CD4-positive, alpha-beta memory T cell (primary cell): ENCODE measurements at regions of chr10 and their contacts with region 1.

Region 1: DNA sequence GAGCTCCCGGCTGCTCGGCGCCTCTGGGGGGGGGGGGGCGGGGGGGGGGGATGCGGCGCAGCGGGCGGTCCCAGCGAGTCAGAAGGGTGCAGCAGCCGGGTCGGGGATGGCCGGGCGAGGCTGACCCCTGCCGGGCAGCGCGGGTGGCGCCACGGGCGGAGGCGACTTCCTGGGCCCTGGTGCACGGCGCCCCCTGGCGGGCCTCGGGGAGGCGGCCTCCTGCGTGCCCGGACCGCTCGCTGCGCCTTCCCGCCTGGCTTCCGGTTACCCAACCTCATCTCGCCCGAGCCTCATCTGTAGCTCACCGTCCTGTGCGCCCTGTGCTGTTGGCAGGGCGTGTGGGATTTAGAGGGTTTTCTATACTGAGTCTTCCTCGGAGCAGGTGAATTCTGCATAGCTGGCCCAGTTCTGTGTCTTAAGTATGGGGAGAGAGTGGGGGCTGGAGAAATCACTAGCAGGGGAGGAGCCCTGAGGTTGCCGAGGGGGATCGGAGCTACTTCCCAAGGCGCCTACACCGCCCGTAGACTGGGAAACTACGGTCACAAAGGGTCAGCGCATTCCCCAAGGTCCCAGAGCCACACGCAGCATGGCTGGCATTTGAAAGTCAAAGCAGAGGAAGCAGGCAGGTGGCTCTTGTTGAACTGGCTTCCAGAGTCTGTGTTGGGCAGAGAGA is 28.3 kb upstream of the WDFY4 start:
- DNase-seq: peak; percentile 74 to 81 (median 78)
- H3K4me3 ChIP-seq: peak overlapping the region in 1 of 2 donors; percentile 12
- H3K4me3 Mint-ChIP-seq: peak overlapping the region; percentile 77 to 89 (median 85)
- H3K27ac ChIP-seq: no peak overlapping the region
- H3K27ac Mint-ChIP-seq: no peak overlapping the region
- H3K4me1 ChIP-seq: peaks cover 12% of the 10 kb centered on the region
- H3K4me1 Mint-ChIP-seq: peaks cover 3 to 13% (median 6%) of the 10 kb centered on the region in 4 donors
- H3K27me3 ChIP-seq: no peaks in the 10 kb centered on the region
- H3K27me3 Mint-ChIP-seq: peaks cover 7 to 9% of the 10 kb centered on the region in 2 donors

Region 2: GRCh38 chr10:48363617-48364355 is 292.6 kb before region 1 on chr10:
- CTCF ChIA-PET with region 1: interaction called, 31 read pairs
- POLR2A ChIA-PET with region 1: no interaction called
- intact Hi-C with region 1: loop called (anchors 1 kb)
- DNase-seq: peak in 4 of 5 donors; percentile 20 to 34 (median 25)
- H3K4me3 ChIP-seq: no peak overlapping the region
- H3K4me3 Mint-ChIP-seq: no peak overlapping the region
- H3K27ac ChIP-seq: no peak overlapping the region
- H3K27ac Mint-ChIP-seq: no peak overlapping the region
- H3K4me1 ChIP-seq: peaks cover 5% of the 10 kb centered on the region
- H3K4me1 Mint-ChIP-seq: peaks cover 14 to 26% (median 20%) of the 10 kb centered on the region in 4 donors
- H3K27me3 ChIP-seq: no peaks in the 10 kb centered on the region
- H3K27me3 Mint-ChIP-seq: no peaks in the 10 kb centered on the region

Region 3: DNA sequence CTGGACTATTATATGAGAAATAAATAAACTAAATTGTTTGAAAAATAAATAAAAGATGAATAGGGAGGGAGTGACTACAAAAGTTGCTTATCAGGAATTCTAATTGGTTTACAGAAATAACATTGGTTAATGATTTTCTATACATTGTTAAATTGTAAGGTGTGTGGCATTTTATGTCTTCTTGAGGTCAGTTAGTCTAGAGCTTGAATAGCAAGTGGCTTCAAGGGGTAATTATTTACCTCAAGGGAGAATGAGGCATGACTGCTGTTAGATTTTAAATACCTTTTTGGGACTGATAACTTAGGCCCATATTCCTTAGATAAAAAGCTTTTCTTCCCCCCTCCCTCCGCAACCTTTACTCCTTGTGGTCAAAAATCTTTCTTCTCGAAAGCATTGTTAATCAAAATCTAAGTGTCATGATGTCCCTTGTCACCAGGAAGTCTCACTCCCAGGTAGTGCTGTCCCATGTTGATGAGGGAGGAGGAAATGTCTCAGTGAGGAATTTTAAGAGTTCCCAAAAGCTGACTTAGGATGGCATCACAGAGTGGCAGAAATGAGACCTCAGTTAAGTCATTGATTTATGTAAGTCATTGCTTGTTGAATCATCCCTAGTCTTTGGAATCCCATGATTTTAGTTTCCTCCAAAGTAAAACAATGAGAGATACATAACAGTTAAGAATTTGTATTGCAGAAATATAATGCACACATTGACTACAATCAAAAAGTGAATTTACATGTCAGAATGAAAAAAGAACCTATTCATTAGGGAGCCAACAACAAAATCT is 278.4 kb before region 1 on chr10:
- CTCF ChIA-PET with region 1: no interaction called
- POLR2A ChIA-PET with region 1: no interaction called
- intact Hi-C with region 1: no loop called
- DNase-seq: no peak
- H3K4me3 ChIP-seq: no peak overlapping the region
- H3K4me3 Mint-ChIP-seq: no peak overlapping the region
- H3K27ac ChIP-seq: no peak overlapping the region
- H3K27ac Mint-ChIP-seq: no peak overlapping the region
- H3K4me1 ChIP-seq: no peaks in the 10 kb centered on the region
- H3K4me1 Mint-ChIP-seq: peaks cover 0 to 6% (median 3%) of the 10 kb centered on the region in 4 donors
- H3K27me3 ChIP-seq: no peaks in the 10 kb centered on the region
- H3K27me3 Mint-ChIP-seq: no peaks in the 10 kb centered on the region

Region 4: GRCh38 chr10:48506147-48506917 is 150.0 kb before region 1 on chr10:
- CTCF ChIA-PET with region 1: no interaction called
- POLR2A ChIA-PET with region 1: no interaction called
- intact Hi-C with region 1: no loop called
- DNase-seq: no peak
- H3K4me3 ChIP-seq: no peak overlapping the region
- H3K4me3 Mint-ChIP-seq: no peak overlapping the region
- H3K27ac ChIP-seq: no peak overlapping the region
- H3K27ac Mint-ChIP-seq: no peak overlapping the region
- H3K4me1 ChIP-seq: no peaks in the 10 kb centered on the region
- H3K4me1 Mint-ChIP-seq: no peaks in the 10 kb centered on the region
- H3K27me3 ChIP-seq: no peaks in the 10 kb centered on the region
- H3K27me3 Mint-ChIP-seq: peaks cover 0 to 6% of the 10 kb centered on the region in 2 donors

Region 5: GRCh38 chr10:48608279-48608681 is 48.1 kb before region 1 on chr10:
- CTCF ChIA-PET with region 1: interaction called, 37 read pairs
- POLR2A ChIA-PET with region 1: no interaction called
- intact Hi-C with region 1: loop called (anchors 1 kb)
- DNase-seq: peak in 3 of 5 donors; percentile 9 to 11 (median 10)
- H3K4me3 ChIP-seq: no peak overlapping the region
- H3K4me3 Mint-ChIP-seq: no peak overlapping the region
- H3K27ac ChIP-seq: no peak overlapping the region
- H3K27ac Mint-ChIP-seq: no peak overlapping the region
- H3K4me1 ChIP-seq: no peaks in the 10 kb centered on the region
- H3K4me1 Mint-ChIP-seq: peaks cover 0 to 6% (median 3%) of the 10 kb centered on the region in 4 donors
- H3K27me3 ChIP-seq: no peaks in the 10 kb centered on the region
- H3K27me3 Mint-ChIP-seq: peaks cover 25 to 32% of the 10 kb centered on the region in 2 donors

Region 6: DNA sequence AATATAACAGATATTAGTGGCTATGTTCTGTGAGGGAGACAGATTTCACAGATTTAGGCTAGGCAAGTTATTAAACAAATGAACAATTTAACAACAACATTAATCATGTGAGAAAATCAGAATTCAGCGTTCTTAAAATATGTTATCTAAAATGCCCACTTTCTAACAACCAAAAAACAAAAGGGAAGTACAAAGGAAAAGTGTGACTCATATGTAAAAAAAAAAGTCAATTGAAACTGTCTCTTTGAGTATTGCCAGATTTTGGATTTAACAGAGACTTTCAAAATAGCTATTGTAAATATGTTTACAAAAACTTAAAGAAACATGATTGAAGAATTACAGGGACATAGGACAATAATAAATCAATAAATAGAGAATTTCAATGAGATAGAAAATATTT is 16.7 kb before region 1 on chr10:
- CTCF ChIA-PET with region 1: interaction called, 12 read pairs
- POLR2A ChIA-PET with region 1: interaction called, 9 read pairs
- intact Hi-C with region 1: no loop called
- DNase-seq: no peak
- H3K4me3 ChIP-seq: no peak overlapping the region
- H3K4me3 Mint-ChIP-seq: no peak overlapping the region
- H3K27ac ChIP-seq: no peak overlapping the region
- H3K27ac Mint-ChIP-seq: no peak overlapping the region
- H3K4me1 ChIP-seq: peaks cover 3% of the 10 kb centered on the region
- H3K4me1 Mint-ChIP-seq: peaks cover 1 to 5% (median 2%) of the 10 kb centered on the region in 4 donors
- H3K27me3 ChIP-seq: no peaks in the 10 kb centered on the region
- H3K27me3 Mint-ChIP-seq: peaks cover 12 to 13% of the 10 kb centered on the region in 2 donors

Region 7: GRCh38 chr10:49512121-49512809 is 855.9 kb after region 1 on chr10:
- CTCF ChIA-PET with region 1: interaction called, 23 read pairs
- POLR2A ChIA-PET with region 1: no interaction called
- intact Hi-C with region 1: no loop called
- DNase-seq: peak in 4 of 5 donors; percentile 35 to 46 (median 38)
- H3K4me3 ChIP-seq: no peak overlapping the region
- H3K4me3 Mint-ChIP-seq: no peak overlapping the region
- H3K27ac ChIP-seq: no peak overlapping the region
- H3K27ac Mint-ChIP-seq: no peak overlapping the region
- H3K4me1 ChIP-seq: peaks cover 21% of the 10 kb centered on the region
- H3K4me1 Mint-ChIP-seq: peaks cover 20 to 28% (median 24%) of the 10 kb centered on the region in 4 donors
- H3K27me3 ChIP-seq: no peaks in the 10 kb centered on the region
- H3K27me3 Mint-ChIP-seq: no peaks in the 10 kb centered on the region